ENCODE measurements at regions of chr4 and their contacts with region 1.

Region 1: DNA sequence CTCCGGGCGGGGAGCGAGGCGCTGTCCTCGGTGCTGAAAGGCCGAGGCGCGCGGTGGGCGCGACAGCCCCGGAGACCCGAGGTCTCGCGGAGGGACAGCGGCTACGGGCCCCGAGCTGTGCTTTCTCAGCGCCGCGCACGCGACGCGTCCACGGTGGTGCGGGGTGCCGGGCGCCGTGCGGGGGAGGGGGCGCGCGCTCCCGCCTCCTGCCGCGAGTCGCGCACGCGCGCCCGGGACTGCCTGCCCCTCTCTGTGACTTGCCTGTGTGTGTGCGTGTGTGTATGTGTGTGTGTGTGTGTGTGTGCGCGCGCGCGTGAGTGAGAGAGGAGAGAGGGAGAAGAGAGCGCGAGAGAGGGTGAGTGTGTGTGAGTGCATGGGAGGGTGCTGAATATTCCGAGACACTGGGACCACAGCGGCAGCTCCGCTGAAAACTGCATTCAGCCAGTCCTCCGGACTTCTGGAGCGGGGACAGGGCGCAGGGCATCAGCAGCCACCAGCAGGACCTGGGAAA is at the start of gene GRIA2:
- DNase-seq: peak; percentile 62 to 97 (median 80)

Region 2: DNA sequence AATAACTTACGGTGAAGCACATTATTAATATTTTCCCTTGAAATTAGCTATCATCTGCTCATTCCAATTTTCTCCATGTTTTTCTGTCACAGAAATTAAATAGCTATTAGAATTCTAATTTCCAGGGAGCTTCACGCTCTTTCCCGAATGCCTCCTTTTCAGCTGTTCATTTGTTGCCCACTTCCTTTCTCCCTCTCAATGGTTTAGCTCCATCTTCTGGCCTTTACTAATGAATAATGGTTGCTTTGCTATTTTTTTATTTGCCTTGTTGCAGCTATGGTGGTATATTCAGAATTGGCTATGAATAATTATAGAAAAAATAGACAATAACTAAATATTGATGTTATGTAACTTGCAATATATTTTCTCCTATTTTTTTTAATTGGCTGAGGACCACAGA is 70.6 kb after region 1 on chr4:
- intact Hi-C with region 1: loop called (anchors 2 kb)
- DNase-seq: no peak

Region 3: DNA sequence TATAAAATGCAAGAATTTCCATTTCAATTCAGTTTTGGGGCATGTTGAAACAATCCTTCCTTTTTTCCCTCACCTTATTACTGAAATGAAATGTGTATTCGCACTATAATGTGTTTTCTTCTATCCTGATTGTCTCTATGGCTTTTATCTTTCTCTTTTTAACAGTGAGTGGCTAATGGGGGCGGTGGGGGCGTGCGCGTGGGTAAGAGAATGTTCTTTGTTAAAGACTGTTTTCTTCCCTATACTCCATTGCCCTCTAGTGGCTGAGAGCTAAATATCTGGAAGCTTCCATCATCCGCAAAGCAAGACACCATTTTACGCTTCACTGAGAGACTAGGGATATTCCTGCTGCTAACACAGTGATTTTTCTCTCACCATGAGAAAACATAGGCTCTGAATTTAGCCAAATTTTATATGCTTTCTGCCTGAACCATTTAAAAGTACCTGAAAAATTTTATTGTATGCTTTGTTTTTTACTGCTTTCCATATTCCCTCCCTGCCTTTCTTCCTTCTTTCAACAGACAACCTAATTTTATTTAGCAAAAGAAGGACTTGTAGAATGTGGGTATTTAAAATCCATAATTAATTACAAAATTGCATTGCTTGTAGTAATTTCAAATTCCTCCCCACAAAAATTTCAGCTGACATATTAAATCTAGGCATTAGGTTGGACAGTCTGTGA is 758.4 kb after region 1 on chr4:
- intact Hi-C with region 1: loop called (anchors 2 kb)
- DNase-seq: peak; percentile 22 to 91 (median 58)

Region 4: GRCh38 chr4:158172261-158173258 is 952.1 kb after region 1 on chr4 and contains the start of gene GASK1B:
- intact Hi-C with region 1: loop called (anchors 10 kb)
- DNase-seq: peak in 2 of 10 donors; percentile 11 to 45